Activated CD4-positive, alpha-beta memory T cell treated with anti-CD3 and anti-CD28 coated beads, Interleukin-2, amount 10 ng/mL, durations not matched to agents 7 days and 5 days (primary cell): ENCODE measurements at regions of chr6 and their contacts with region 1.

Region 1: DNA sequence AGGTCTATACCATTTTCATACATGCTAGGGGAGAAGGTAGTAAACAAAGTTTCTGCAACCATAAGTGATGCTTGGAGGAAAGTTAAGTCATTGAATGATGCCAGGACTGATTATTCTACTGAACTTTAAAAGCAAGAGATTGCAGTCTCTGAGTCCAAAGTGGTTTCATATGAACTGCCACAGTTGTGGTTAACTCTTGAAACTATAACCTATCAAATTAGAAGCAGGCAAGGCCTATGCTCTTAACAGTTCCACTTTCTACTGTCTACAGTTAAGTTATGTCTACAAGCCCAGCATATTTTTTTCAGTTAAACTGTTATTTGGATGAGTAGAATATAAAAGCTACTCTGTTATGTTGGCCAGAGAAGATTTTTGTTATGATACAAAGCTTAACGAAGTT is 326.5 kb upstream of the RUNX2 start:
- DNase-seq: no peak
- H3K4me3 Mint-ChIP-seq: no peak overlapping the region
- H3K27ac Mint-ChIP-seq: peak overlapping the region; percentile 79
- H3K4me1 Mint-ChIP-seq: peaks cover 31% of the 10 kb centered on the region
- H3K27me3 Mint-ChIP-seq: no peaks in the 10 kb centered on the region

Region 2: GRCh38 chr6:44976719-44977641 is 24.7 kb before region 1 on chr6:
- CTCF ChIA-PET with region 1: interaction called, 4 read pairs
- POLR2A ChIA-PET with region 1: interaction called, 11 read pairs
- DNase-seq: no peak
- H3K4me3 Mint-ChIP-seq: peak overlapping the region; percentile 0
- H3K27ac Mint-ChIP-seq: peak overlapping the region; percentile 81
- H3K4me1 Mint-ChIP-seq: peaks cover 15% of the 10 kb centered on the region
- H3K27me3 Mint-ChIP-seq: no peaks in the 10 kb centered on the region

Region 3: GRCh38 chr6:45156075-45156474 is 154.4 kb after region 1 on chr6:
- CTCF ChIA-PET with region 1: no interaction called
- POLR2A ChIA-PET with region 1: interaction called, 10 read pairs
- DNase-seq: peak; percentile 39
- H3K4me3 Mint-ChIP-seq: no peak overlapping the region
- H3K27ac Mint-ChIP-seq: peak overlapping the region; percentile 51
- H3K4me1 Mint-ChIP-seq: peaks cover 20% of the 10 kb centered on the region
- H3K27me3 Mint-ChIP-seq: no peaks in the 10 kb centered on the region

Region 4: GRCh38 chr6:45577836-45578504 is 576.3 kb after region 1 on chr6:
- CTCF ChIA-PET with region 1: no interaction called
- POLR2A ChIA-PET with region 1: no interaction called
- DNase-seq: no peak
- H3K4me3 Mint-ChIP-seq: no peak overlapping the region
- H3K27ac Mint-ChIP-seq: no peak overlapping the region
- H3K4me1 Mint-ChIP-seq: peaks cover 23% of the 10 kb centered on the region
- H3K27me3 Mint-ChIP-seq: no peaks in the 10 kb centered on the region